ENCODE measurements at regions of chr2 and their contacts with region 1.

Region 1: DNA sequence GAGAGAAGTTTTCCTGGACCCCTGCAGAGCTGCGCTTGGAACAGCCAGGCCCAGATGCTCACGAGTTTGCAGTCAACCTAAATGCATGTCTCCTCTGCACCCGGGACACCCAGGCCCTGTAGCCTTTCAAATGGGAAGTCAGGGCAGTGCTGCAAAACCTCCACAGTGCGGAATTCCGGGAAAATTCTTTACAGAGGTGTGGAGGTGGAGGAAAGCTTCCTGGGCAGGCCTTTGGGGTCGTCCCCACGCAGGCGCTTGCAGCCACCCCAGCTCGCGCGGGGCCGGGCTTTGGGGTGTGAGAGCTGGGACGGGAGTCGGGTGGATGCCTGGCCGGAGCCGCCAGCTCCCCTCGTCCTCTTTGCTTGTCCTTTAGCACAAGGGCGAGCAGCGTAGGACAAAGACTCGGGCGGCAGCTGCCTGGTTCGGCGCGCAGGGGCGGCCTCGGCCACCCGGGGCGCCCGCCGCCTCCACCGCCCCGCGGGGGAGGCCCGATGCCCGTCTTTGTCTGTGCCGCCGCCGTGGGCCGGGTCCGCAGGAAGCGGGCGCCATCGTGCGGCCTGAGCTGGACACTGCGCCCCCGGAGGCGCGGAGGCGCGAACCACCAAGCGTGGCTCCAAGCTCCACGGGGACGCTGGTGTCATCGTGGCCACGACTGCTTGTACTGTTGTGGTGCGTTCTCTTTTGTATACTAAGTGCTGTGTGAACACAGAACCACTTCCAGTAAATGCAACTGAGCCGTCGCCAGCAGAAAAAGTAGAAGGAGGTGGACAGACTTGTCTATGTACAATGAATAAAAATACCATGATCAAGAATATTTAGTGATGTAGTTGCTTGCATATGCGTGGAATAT is 28.2 kb upstream of the BCL11A start:
- DNase-seq: peak; percentile 63
- H3K4me3 ChIP-seq: peak overlapping the region; percentile 22 to 30
- H3K27ac ChIP-seq: no peak overlapping the region
- H3K4me1 ChIP-seq: no peaks in the 10 kb centered on the region
- H3K27me3 ChIP-seq: no peaks in the 10 kb centered on the region
- CTCF ChIP-seq: peak; percentile 73 to 95 (median 86)
- POLR2A ChIP-seq: no peak

Region 2: GRCh38 chr2:59301466-59302402 is 1279.9 kb before region 1 on chr2:
- intact Hi-C with region 1: loop called (anchors 10 kb)
- DNase-seq: peak; percentile 43
- H3K4me3 ChIP-seq: no peak overlapping the region
- H3K27ac ChIP-seq: no peak overlapping the region
- H3K4me1 ChIP-seq: no peaks in the 10 kb centered on the region
- H3K27me3 ChIP-seq: no peaks in the 10 kb centered on the region
- CTCF ChIP-seq: peak in 3 of 4 experiments; percentile 43 to 73 (median 62)
- POLR2A ChIP-seq: no peak

Region 3: DNA sequence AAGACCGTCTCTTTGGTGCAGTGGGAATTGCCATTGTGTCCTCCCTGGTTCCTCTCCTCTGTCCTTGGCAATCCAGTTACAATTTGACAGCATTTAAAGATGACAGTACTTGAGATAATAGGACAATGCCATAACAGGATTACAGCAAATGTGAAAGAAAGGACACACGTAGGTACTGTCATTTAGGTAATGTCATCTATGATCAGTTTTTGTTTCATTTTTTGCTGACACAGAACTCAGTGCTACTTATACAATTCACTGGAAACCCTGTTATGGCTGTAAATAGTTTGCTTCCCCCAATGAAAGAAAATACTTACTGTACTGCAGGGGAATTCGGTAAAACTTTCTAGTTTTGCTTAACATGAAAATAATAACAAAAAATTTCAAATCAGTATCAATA is 93.4 kb before region 1 on chr2:
- intact Hi-C with region 1: no loop called
- DNase-seq: no peak
- H3K4me3 ChIP-seq: no peak overlapping the region
- H3K27ac ChIP-seq: no peak overlapping the region
- H3K4me1 ChIP-seq: no peaks in the 10 kb centered on the region
- H3K27me3 ChIP-seq: no peaks in the 10 kb centered on the region
- CTCF ChIP-seq: no peak
- POLR2A ChIP-seq: no peak

Measured in prostate gland (tissue), 2 donors.